PC-9 (cell line): ENCODE measurements at regions of chr16 and their contacts with region 1.

Region 1: DNA sequence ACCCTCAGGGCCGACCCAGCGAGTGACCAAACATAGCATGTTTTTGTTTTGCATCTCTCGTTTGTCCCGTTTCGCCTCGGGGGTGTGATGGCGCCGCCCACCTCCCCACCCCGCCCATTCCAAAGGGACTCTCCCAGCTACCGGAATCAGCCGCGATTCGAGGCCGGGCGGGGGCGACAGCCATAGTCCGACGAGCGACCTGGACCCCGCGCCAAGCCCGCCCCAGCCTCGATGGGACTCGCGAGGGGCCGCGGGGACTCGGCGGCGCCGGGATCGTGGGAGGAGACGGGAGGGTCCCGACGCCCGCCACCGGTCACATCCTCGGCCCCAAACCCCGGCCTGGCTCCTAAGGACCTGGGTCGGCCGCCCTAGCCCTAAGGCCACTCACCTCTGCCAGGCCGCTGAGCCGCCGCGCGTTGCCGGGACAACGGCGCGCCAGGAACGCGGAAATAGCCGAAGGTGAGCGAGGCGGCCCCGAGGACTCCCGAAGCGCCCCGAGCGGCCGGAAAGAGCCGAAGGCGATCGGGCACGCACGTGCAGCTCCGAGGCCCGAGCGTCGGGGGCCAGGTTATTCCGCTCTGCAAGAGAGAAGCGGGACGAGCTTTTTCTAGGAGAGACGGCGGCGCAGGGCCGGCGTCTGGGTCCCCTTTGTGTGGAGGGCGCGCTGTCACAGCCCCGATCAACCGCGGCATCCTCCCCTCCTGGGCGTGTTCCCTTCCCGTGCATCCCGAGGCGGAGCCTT is 1.4 kb downstream of the IFT140 start:
- DNase-seq: peak; percentile 84 to 97
- H3K4me3 ChIP-seq: peak overlapping the region; percentile 87
- H3K27ac ChIP-seq: peak overlapping the region; percentile 92
- H3K4me1 ChIP-seq: peaks cover 21% of the 10 kb centered on the region
- H3K27me3 ChIP-seq: no peaks in the 10 kb centered on the region
- CTCF ChIP-seq: no peak

Region 2: GRCh38 chr16:825341-826061 is 784.9 kb before region 1 on chr16:
- CTCF ChIA-PET with region 1: no interaction called
- POLR2A ChIA-PET with region 1: no interaction called
- intact Hi-C with region 1: no loop called
- DNase-seq: no peak
- H3K4me3 ChIP-seq: no peak overlapping the region
- H3K27ac ChIP-seq: no peak overlapping the region
- H3K4me1 ChIP-seq: no peaks in the 10 kb centered on the region
- H3K27me3 ChIP-seq: peaks cover 93% of the 10 kb centered on the region
- CTCF ChIP-seq: no peak

Region 3: GRCh38 chr16:1331712-1332617 is 278.5 kb before region 1 on chr16:
- CTCF ChIA-PET with region 1: no interaction called
- POLR2A ChIA-PET with region 1: no interaction called
- intact Hi-C with region 1: loop called (anchors 5 kb)
- DNase-seq: peak; percentile 82 to 92
- H3K4me3 ChIP-seq: peak overlapping the region; percentile 49; the same call in 1 of the 2 replicates
- H3K27ac ChIP-seq: no peak overlapping the region
- H3K4me1 ChIP-seq: peaks cover 15% of the 10 kb centered on the region
- H3K27me3 ChIP-seq: no peaks in the 10 kb centered on the region
- CTCF ChIP-seq: no peak

Region 4: GRCh38 chr16:1474796-1475551 is 135.5 kb before region 1 on chr16 and contains the start of gene CLCN7:
- CTCF ChIA-PET with region 1: no interaction called
- POLR2A ChIA-PET with region 1: no interaction called
- intact Hi-C with region 1: loop called (anchors 5 kb)
- DNase-seq: peak; percentile 51 to 92
- H3K4me3 ChIP-seq: peak within 1 kb of the TSS; percentile 99
- H3K27ac ChIP-seq: peak within 1 kb of the TSS; percentile 65
- H3K4me1 ChIP-seq: peaks cover 12% of the 10 kb centered on the region
- H3K27me3 ChIP-seq: no peaks in the 10 kb centered on the region
- CTCF ChIP-seq: no peak
- total RNA-seq, gene CLCN7: 110 and 111 TPM in 2 replicates

Region 5: GRCh38 chr16:1543085-1543896 is 67.2 kb before region 1 on chr16:
- CTCF ChIA-PET with region 1: no interaction called
- POLR2A ChIA-PET with region 1: interaction called, 4 read pairs
- intact Hi-C with region 1: loop called (anchors 5 kb)
- DNase-seq: peak; percentile 37 to 48
- H3K4me3 ChIP-seq: no peak overlapping the region
- H3K27ac ChIP-seq: 0 out of 2 replicates have a peak overlapping the region, but pooled peaks have one; percentile 23
- H3K4me1 ChIP-seq: peaks cover 20% of the 10 kb centered on the region
- H3K27me3 ChIP-seq: no peaks in the 10 kb centered on the region
- CTCF ChIP-seq: no peak

Region 6: GRCh38 chr16:1691276-1691675 is 80.8 kb after region 1 on chr16:
- CTCF ChIA-PET with region 1: no interaction called
- POLR2A ChIA-PET with region 1: no interaction called
- intact Hi-C with region 1: loop called (anchors 5 kb)
- DNase-seq: peak in 1 of 2 experiments; percentile 46
- H3K4me3 ChIP-seq: no peak overlapping the region
- H3K27ac ChIP-seq: peak overlapping the region; percentile 99
- H3K4me1 ChIP-seq: peaks cover 64% of the 10 kb centered on the region
- H3K27me3 ChIP-seq: no peaks in the 10 kb centered on the region
- CTCF ChIP-seq: no peak; the same call in 1 of the 2 replicates

Region 7: DNA sequence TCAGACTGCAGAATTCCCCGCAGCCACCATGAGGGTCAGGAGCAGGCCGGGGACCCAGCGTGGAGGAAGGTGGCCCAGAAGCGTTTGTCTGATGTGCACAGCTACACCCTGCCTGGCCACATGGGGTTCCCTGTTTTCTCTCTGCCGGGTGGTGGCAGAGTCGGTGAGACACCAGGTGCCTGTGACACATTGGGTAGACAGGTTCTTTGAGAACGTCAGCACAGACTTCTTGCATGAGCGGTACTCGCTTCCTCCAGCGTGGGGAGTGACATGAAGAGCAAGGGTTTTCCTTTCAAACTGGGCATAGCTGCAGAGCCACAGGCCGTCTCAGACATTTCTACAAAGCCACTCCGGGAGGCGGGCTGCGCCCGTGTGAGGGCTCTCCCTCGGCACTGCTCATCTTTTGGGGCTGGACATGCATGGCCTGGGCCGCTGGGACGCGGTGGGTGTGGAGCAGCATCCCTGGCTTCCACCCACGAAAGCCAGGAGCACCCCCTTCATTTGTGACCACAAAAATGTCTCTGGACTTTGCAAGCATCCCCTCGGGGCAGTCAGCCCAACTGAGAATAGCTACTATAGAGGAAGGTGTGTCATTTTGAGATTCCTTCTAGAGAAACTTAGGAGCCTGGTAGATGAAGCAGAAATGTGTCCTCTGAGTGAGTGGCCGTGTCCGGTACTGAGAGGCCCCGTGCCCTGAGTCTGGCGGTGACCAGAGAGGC is 134.9 kb after region 1 on chr16:
- CTCF ChIA-PET with region 1: no interaction called
- POLR2A ChIA-PET with region 1: interaction called, 18 read pairs
- intact Hi-C with region 1: no loop called
- DNase-seq: peak; percentile 91 to 94
- H3K4me3 ChIP-seq: peak overlapping the region; percentile 49; the same call in 1 of the 2 replicates
- H3K27ac ChIP-seq: peak overlapping the region; percentile 100
- H3K4me1 ChIP-seq: peaks cover 49% of the 10 kb centered on the region
- H3K27me3 ChIP-seq: no peaks in the 10 kb centered on the region
- CTCF ChIP-seq: no peak; the same call in 1 of the 2 replicates